GM12878 (cell line): ENCODE measurements at regions of chr2 and their contacts with region 1.

Region 1: GRCh38 chr2:68196120-68196716 is 38.5 kb downstream of the PNO1 start:
- DNase-seq: no peak
- ATAC-seq: peak; percentile 40; the same call in 2 of the 3 replicates
- H3K4me3 ChIP-seq: no peak overlapping the region
- H3K27ac ChIP-seq: no peak overlapping the region
- H3K4me1 ChIP-seq: peaks cover 3% of the 10 kb centered on the region; the same call in 1 of the 2 replicates
- H3K27me3 ChIP-seq: no peaks in the 10 kb centered on the region
- CTCF ChIP-seq: peak; percentile 33 to 39 (median 37); a peak in 5 of 6 replicates
- EP300 ChIP-seq: no peak
- POLR2A ChIP-seq: no peak
- RAD21 ChIP-seq: peak; percentile 61

Region 2: GRCh38 chr2:68176657-68177056 is 19.6 kb before region 1 on chr2:
- CTCF ChIA-PET with region 1: interaction called, 11 read pairs
- POLR2A ChIA-PET with region 1: no interaction called
- RAD21 ChIA-PET with region 1: interaction called, 3 read pairs
- SMC1A ChIA-PET with region 1: interaction called, 3 read pairs
- in situ Hi-C with region 1: no loop called
- intact Hi-C with region 1: no loop called
- DNase-seq: no peak
- ATAC-seq: no peak
- H3K4me3 ChIP-seq: no peak overlapping the region
- H3K27ac ChIP-seq: no peak overlapping the region
- H3K4me1 ChIP-seq: no peaks in the 10 kb centered on the region
- H3K27me3 ChIP-seq: no peaks in the 10 kb centered on the region
- CTCF ChIP-seq: no peak
- EP300 ChIP-seq: no peak
- POLR2A ChIP-seq: no peak
- RAD21 ChIP-seq: no peak

Region 3: DNA sequence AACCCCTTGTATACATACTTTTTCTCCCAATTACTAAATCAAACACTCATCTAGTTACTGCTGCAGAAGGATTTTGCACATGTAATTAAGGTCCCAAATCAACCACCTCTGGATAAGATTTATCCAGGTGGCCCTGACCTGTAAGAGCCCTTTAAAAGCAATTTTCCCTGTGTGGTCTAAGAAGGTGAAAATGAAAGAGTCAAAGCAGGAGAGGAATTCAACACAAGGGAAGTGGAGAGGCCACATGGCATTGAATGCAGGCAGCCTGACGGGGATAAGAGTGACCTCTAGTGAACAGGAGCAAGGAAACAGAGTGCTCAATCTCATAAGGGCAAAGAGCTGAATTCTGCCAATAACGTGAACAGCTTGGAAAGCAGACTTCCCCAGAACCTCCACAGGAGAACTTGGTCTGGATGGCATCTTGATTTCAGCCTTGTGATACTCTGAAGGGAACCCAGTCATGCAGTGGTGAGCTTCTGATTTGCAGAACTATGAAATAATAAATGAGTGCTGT is 29.0 kb after region 1 on chr2:
- CTCF ChIA-PET with region 1: interaction called, 61 read pairs
- POLR2A ChIA-PET with region 1: interaction called, 5 read pairs
- RAD21 ChIA-PET with region 1: interaction called, 7 read pairs
- SMC1A ChIA-PET with region 1: interaction called, 42 read pairs
- in situ Hi-C with region 1: no loop called
- intact Hi-C with region 1: no loop called
- DNase-seq: peak; percentile 26
- ATAC-seq: peak; percentile 94
- H3K4me3 ChIP-seq: no peak overlapping the region
- H3K27ac ChIP-seq: peak overlapping the region; percentile 14; the same call in 1 of the 2 replicates
- H3K4me1 ChIP-seq: peaks cover 5% of the 10 kb centered on the region; the same call in 1 of the 2 replicates
- H3K27me3 ChIP-seq: no peaks in the 10 kb centered on the region
- CTCF ChIP-seq: peak; percentile 44 to 79 (median 49); a peak in 5 of 6 replicates
- EP300 ChIP-seq: no peak
- POLR2A ChIP-seq: no peak
- RAD21 ChIP-seq: peak; percentile 71

Region 4: DNA sequence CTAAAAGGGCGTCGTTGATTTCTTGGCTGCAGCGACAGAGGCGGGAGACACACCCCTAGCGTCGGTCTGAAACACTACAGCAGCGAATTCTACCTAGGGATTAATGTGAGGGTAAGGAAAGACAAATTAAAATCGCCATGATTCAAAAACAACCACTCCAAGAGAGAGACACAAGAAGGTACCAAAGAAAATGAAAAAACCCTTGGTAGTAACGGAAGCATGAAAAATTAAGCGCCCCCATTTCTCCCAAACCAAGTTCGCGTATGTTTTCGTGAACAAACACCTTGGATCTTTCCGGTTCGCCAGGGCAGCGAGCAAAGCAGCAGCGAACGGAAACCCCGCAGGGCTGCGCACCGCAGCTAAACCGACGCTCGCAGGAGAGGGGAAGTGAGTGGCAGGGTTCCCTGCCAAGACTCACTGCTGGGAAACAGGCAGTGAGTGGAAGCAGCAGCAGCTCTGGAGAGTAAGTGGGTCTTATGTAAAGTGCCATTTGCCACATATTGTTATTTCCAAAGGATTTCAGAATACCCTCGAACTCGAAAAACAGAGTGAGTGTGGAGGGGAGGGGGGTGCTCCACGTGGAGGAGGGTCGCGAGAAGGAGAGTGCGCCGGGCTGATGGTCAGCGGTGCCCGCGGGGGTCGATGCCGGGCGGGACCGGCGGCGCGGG is 55.1 kb after region 1 on chr2:
- CTCF ChIA-PET with region 1: interaction called, 35 read pairs
- POLR2A ChIA-PET with region 1: interaction called, 4 read pairs
- RAD21 ChIA-PET with region 1: interaction called, 6 read pairs
- SMC1A ChIA-PET with region 1: interaction called, 9 read pairs
- in situ Hi-C with region 1: no loop called
- intact Hi-C with region 1: no loop called
- DNase-seq: peak; percentile 64
- ATAC-seq: peak; percentile 70
- H3K4me3 ChIP-seq: peak overlapping the region; percentile 85
- H3K27ac ChIP-seq: peak overlapping the region; percentile 91
- H3K4me1 ChIP-seq: peaks cover 18% of the 10 kb centered on the region
- H3K27me3 ChIP-seq: no peaks in the 10 kb centered on the region
- CTCF ChIP-seq: peak; percentile 70 to 79 (median 76)
- EP300 ChIP-seq: no peak
- POLR2A ChIP-seq: no peak; the same call in 1 of the 2 replicates
- RAD21 ChIP-seq: peak; percentile 71

Region 5: DNA sequence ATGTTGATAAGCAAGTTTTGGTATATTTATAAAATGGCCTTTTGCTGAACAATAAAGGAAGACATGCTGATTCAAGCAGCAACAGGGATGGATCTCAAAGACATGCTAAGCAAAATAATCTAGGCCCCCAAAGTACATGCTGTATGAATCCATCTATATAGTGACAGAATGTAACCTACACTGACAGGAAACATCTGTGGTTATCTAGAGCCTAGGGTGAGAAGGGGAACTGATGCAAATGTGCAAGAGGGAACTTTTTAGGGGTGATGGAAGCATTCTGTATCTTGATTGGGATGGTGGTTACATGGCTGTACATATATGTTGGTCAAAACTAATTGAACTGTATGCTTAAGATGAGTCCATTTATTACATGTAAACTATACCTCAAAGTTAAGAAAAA is 99.3 kb after region 1 on chr2:
- CTCF ChIA-PET with region 1: interaction called, 11 read pairs
- POLR2A ChIA-PET with region 1: no interaction called
- RAD21 ChIA-PET with region 1: interaction called, 13 read pairs
- SMC1A ChIA-PET with region 1: interaction called, 15 read pairs
- in situ Hi-C with region 1: no loop called
- intact Hi-C with region 1: no loop called
- DNase-seq: no peak
- ATAC-seq: peak; percentile 79
- H3K4me3 ChIP-seq: no peak overlapping the region
- H3K27ac ChIP-seq: no peak overlapping the region
- H3K4me1 ChIP-seq: peaks cover 6% of the 10 kb centered on the region
- H3K27me3 ChIP-seq: no peaks in the 10 kb centered on the region
- CTCF ChIP-seq: no peak
- EP300 ChIP-seq: no peak
- POLR2A ChIP-seq: no peak
- RAD21 ChIP-seq: no peak